ENCODE measurements at regions of chr17 and their contacts with region 1.

Region 1: DNA sequence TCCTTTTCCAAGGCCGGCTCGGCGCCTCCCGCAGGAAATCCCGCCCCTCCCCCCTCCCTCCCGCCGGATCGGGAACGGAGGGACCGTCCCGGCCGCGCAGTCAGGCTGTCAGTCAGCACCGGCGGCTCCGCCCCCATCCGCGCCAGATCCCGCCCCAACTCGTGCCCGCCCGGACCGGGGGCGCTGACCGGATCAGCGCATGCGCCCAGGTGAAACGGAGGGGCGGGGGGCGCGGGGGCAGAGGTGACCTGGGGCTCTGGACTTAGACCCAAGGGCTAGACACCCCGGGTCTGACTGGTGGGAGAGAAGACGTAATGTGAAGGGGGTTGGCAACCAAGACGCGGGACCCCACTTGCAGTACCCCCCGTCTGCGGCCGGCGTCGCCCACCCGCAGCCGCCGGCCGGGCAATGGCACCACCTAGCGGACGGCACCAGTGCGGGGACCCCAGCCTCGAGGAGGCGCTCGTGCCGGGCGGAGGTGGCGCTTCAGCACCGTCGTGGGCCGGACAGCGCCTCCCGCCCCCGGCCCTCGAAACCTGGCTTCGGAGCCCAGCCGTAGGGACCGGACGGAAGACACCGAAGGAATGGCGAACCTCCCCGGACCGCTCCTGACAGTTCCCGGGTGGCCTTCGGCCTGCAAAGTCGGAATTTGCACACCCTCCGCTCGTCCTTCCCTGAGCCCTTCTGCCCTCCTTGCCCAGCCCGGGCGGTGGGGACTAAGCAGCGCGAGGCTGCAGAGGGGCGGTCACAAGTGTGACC is at the start of gene CASKIN2:
- DNase-seq: peak; percentile 30
- ATAC-seq: peak; percentile 71
- H3K4me3 ChIP-seq: peak within 1 kb of the TSS; percentile 90
- H3K27ac ChIP-seq: peak within 1 kb of the TSS; percentile 10; the same call in 1 of the 2 replicates
- H3K4me1 ChIP-seq: peaks cover 20% of the 10 kb centered on the region
- H3K27me3 ChIP-seq: no peaks in the 10 kb centered on the region
- CTCF ChIP-seq: peak; percentile 95 to 99 (median 95)
- EP300 ChIP-seq: no peak
- POLR2A ChIP-seq: no peak
- RAD21 ChIP-seq: peak; percentile 65
- polyA plus RNA-seq, gene CASKIN2: 0.02 TPM in 1 of 2 experiments, not detected in the other

Region 2: GRCh38 chr17:75456417-75457046 is 59.1 kb before region 1 on chr17 and contains the start of gene TMEM94:
- CTCF ChIA-PET with region 1: interaction called, 10 read pairs
- POLR2A ChIA-PET with region 1: interaction called, 4 read pairs
- RAD21 ChIA-PET with region 1: interaction called, 6 read pairs
- SMC1A ChIA-PET with region 1: interaction called, 8 read pairs
- in situ Hi-C with region 1: no loop called
- intact Hi-C with region 1: no loop called
- DNase-seq: peak; percentile 92
- ATAC-seq: peak; percentile 91
- H3K4me3 ChIP-seq: peak within 1 kb of the TSS; percentile 86
- H3K27ac ChIP-seq: peak within 1 kb of the TSS; percentile 84
- H3K4me1 ChIP-seq: peaks cover 41% of the 10 kb centered on the region
- H3K27me3 ChIP-seq: no peaks in the 10 kb centered on the region
- CTCF ChIP-seq: no peak
- EP300 ChIP-seq: no peak
- POLR2A ChIP-seq: peak; percentile 72
- RAD21 ChIP-seq: no peak
- polyA plus RNA-seq, gene TMEM94: 0.31 to 2.3 TPM

Region 3: DNA sequence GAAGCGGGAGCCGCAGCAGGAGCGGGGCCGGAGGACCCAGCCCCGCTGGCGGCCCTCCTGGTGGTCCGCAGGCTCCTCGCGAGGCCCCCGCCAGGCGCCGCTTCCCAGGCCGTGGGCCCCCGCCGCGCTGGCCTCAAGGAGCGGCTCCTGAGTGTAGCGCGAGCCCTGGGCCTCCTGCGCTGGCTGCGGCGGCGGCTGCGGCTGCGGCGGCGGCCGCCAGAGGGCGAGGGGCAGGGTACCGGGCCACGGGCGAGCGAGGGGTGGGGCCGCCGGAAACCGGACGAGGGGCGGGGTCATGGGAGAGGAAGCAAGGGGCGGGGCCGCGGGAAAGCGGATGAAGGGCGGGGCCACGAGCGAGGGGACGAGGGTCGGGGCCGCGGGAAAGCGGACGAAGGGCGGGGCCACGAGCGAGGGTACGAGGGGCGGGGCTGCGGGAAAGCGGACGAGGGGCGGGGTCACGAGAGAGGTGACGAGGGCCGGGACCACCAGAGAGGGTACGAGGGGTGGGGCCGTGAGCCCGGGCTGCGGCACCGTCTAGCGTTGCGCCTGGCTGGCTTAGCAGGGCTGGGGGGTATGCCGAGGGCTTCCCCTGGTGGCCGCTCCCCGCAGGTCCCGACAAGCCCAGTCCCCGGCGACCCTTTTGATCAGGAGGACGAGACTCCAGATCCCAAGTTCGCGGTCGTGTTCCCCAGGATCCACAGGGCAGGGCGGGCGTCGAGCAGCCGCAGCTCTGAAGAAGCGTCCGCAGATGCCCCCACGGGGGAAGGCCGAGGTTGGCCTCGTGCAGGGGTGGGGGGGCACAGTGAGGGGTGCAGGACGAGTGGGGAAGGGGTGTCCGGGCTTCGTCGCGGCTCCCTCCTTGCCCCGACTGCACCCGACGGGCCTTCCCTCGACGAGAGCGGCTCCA is 73.6 kb after region 1 on chr17:
- CTCF ChIA-PET with region 1: interaction called, 12 read pairs
- POLR2A ChIA-PET with region 1: interaction called, 4 read pairs
- RAD21 ChIA-PET with region 1: interaction called, 6 read pairs
- SMC1A ChIA-PET with region 1: interaction called, 5 read pairs
- in situ Hi-C with region 1: no loop called
- intact Hi-C with region 1: loop called (anchors 2 kb)
- DNase-seq: peak; percentile 48
- ATAC-seq: peak; percentile 90
- H3K4me3 ChIP-seq: peak overlapping the region; percentile 69
- H3K27ac ChIP-seq: peak overlapping the region; percentile 33; the same call in 1 of the 2 replicates
- H3K4me1 ChIP-seq: 0 out of 2 replicates have a peak, but pooled peaks cover 4% of the 10 kb centered on the region
- H3K27me3 ChIP-seq: peaks cover 5 to 9% of the 10 kb centered on the region in 2 experiments
- CTCF ChIP-seq: peak; percentile 46 to 66 (median 65)
- EP300 ChIP-seq: no peak
- POLR2A ChIP-seq: peak; percentile 73
- RAD21 ChIP-seq: peak; percentile 44

Measured in GM12878 (cell line).